Activated B cell treated with CpG ODN at 0.5 μM for 24 hours (primary cell): ENCODE measurements at regions of chr2 and their contacts with region 1.

Region 1: DNA sequence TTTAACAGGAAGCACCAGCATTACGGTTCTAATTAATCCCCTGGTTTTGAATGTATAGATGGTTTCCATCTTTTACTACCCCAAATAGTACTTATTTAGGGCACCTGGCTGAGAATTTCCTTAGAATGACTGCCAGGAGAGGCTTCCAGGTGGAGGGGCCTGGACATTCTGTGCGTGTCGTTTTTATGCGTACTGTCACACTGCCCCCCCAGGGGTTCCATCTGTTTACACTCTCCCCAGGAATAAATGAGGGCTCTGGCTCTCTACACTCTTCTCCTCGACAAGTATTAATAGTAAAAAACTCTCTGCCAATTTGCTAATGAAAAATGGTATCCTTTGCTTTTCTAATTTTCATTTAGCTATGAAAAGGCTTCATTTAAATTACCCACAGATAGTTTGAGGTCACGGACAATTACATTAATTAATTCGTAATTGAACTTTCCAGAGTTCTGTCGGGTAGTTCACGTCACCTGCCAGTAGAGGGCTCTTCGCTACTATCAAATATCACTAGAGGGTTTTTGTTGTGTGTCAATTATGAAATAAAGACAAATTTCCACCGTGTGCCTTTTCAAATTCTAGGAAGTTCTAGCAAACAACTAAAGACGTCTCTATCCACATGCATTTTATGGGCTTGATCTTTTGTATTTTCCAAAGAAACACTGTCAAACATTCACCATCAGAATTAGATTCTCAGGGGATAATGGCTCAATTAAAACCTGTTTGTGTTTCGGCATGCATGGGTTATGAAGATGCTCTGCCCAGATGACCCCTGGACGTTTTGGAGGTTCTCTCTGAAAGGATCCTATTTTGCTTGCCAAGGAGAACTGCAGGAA is 88.8 kb upstream of the ASB18 start:
- DNase-seq: no peak
- ATAC-seq: peak; percentile 34
- H3K4me3 Mint-ChIP-seq: no peak overlapping the region
- H3K27ac Mint-ChIP-seq: no peak overlapping the region
- H3K4me1 Mint-ChIP-seq: peaks cover 2% of the 10 kb centered on the region
- H3K27me3 Mint-ChIP-seq: peaks cover 13% of the 10 kb centered on the region
- CTCF ChIP-seq: peak; percentile 85

Region 2: DNA sequence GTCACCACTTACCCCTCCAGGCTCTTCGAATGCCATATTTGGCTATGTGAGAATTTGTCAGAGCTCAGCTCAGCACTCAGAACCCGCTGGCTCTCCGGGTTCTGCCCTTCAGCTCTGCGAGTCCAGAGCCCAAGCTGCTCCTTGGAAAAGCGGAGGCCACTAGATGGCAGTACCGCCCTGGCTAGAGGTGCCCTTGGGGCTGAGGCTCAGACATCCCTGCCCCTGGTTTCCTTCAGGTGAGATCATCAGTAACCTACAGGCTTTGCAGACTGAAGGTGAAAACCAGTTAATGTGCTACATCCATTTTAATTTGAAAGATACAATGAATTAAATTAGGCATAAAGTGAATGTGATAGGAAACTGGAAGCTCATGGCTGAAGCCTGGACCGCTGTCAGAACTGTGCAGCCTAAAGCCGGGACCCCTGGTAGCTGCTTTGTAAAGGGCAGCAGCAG is 573.5 kb before region 1 on chr2:
- CTCF ChIA-PET with region 1: no interaction called
- POLR2A ChIA-PET with region 1: no interaction called
- intact Hi-C with region 1: loop called (anchors 5 kb)
- DNase-seq: no peak
- ATAC-seq: peak; percentile 34
- H3K4me3 Mint-ChIP-seq: no peak overlapping the region
- H3K27ac Mint-ChIP-seq: no peak overlapping the region
- H3K4me1 Mint-ChIP-seq: no peaks in the 10 kb centered on the region
- H3K27me3 Mint-ChIP-seq: peaks cover 17% of the 10 kb centered on the region
- CTCF ChIP-seq: no peak

Region 3: GRCh38 chr2:236298924-236299475 is 54.0 kb before region 1 on chr2:
- CTCF ChIA-PET with region 1: no interaction called
- POLR2A ChIA-PET with region 1: no interaction called
- intact Hi-C with region 1: no loop called
- DNase-seq: no peak
- ATAC-seq: no peak
- H3K4me3 Mint-ChIP-seq: no peak overlapping the region
- H3K27ac Mint-ChIP-seq: no peak overlapping the region
- H3K4me1 Mint-ChIP-seq: no peaks in the 10 kb centered on the region
- H3K27me3 Mint-ChIP-seq: no peaks in the 10 kb centered on the region
- CTCF ChIP-seq: no peak

Region 4: GRCh38 chr2:236393101-236393500 is 40.1 kb after region 1 on chr2:
- CTCF ChIA-PET with region 1: no interaction called
- POLR2A ChIA-PET with region 1: no interaction called
- intact Hi-C with region 1: no loop called
- DNase-seq: no peak
- ATAC-seq: no peak
- H3K4me3 Mint-ChIP-seq: no peak overlapping the region
- H3K27ac Mint-ChIP-seq: no peak overlapping the region
- H3K4me1 Mint-ChIP-seq: no peaks in the 10 kb centered on the region
- H3K27me3 Mint-ChIP-seq: peaks cover 21% of the 10 kb centered on the region
- CTCF ChIP-seq: no peak

Region 5: DNA sequence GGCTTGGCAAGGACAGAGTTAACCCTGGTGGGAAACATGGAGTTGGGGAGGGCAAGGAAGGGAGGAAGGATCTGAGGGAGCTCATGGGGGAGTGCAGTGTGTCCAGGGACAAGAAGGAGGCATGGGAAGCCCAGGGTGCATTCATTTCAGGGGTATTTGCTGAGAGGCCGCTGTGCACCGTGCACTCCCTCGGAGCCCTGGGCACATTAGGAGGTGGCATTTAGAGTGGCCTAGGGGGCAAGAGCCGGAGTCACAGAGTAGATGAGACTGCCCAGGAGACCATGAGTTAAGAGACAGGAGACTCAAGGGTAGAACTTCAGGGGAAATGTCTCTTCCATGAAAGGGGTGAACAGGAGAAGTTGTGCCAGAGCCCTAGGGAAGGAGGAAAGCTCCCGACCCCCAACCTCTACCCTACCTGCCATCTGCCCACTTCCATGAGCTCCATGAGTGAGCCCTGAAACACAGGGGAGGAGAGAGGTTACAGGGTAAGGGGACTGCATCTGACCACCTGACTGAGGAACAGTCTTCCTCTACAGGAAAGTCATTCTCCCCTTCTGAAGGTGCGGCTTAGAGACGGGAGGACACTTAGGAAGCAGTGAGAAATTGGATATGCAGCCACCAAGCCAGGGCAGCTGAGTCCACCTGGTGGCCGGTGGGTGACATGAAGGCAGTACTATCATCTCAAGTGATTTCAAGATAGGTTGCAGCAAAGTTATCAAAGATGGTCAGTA is 674.2 kb after region 1 on chr2:
- CTCF ChIA-PET with region 1: interaction called, 12 read pairs
- POLR2A ChIA-PET with region 1: no interaction called
- intact Hi-C with region 1: loop called (anchors 1 kb)
- DNase-seq: no peak
- ATAC-seq: no peak
- H3K4me3 Mint-ChIP-seq: no peak overlapping the region
- H3K27ac Mint-ChIP-seq: no peak overlapping the region
- H3K4me1 Mint-ChIP-seq: no peaks in the 10 kb centered on the region
- H3K27me3 Mint-ChIP-seq: peaks cover 6% of the 10 kb centered on the region
- CTCF ChIP-seq: no peak

Region 6: GRCh38 chr2:237060534-237061312 is 707.7 kb after region 1 on chr2:
- CTCF ChIA-PET with region 1: interaction called, 22 read pairs
- POLR2A ChIA-PET with region 1: no interaction called
- intact Hi-C with region 1: loop called (anchors 1 kb)
- DNase-seq: no peak
- ATAC-seq: no peak
- H3K4me3 Mint-ChIP-seq: no peak overlapping the region
- H3K27ac Mint-ChIP-seq: no peak overlapping the region
- H3K4me1 Mint-ChIP-seq: peaks cover 37% of the 10 kb centered on the region
- H3K27me3 Mint-ChIP-seq: no peaks in the 10 kb centered on the region
- CTCF ChIP-seq: no peak

Region 7: GRCh38 chr2:237072067-237072931 is 719.3 kb after region 1 on chr2:
- CTCF ChIA-PET with region 1: interaction called, 4 read pairs
- POLR2A ChIA-PET with region 1: no interaction called
- intact Hi-C with region 1: loop called (anchors 1 kb)
- DNase-seq: peak; percentile 60
- ATAC-seq: peak; percentile 56
- H3K4me3 Mint-ChIP-seq: no peak overlapping the region
- H3K27ac Mint-ChIP-seq: no peak overlapping the region
- H3K4me1 Mint-ChIP-seq: no peaks in the 10 kb centered on the region
- H3K27me3 Mint-ChIP-seq: no peaks in the 10 kb centered on the region
- CTCF ChIP-seq: peak; percentile 87